A673 (cell line): ENCODE measurements at regions of chr20 and their contacts with region 1.

Region 1: DNA sequence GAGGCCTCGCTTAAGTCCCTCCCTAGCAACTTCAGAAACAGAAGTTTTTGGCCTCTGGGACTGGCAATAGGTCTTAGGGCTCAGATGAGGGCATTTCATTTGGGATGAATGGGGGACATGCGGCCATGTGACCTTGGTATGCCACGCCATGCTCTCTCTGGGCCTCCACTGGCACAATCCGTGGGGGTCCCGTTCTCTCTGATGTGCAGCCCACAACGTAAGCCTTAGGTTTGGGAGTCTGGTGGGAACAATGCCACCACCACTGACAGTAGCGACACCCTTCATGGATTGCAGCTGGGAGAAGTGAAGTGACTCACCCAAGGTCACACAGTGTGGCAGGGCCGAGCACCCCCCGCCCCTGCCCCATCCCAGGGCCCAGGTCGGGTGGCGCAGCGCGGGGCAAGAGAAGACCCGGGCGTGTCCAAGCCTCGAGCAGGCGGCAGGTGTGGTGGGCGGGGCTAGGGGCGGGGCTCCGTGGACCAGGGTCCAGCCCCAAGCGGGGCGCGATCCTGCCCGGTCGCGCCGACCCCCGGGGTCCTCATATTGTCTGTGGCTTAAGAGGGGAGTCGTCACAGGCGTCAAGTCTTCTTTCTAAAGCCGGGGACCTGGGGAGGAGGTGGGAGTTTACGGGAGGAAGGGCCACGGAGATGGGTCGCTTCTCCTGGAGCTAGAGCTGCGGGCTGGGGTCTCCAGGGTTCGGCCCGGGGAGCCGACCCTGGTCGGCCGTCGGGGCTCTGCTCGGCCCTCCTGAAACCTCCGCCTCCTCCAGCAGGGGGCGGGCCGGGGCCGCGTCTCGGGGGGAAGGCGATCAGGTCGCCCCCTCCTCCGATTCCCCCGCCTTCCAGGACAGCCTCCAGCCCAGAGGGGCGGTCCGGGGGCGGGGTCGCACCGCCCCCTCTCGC is 698 bp upstream of the CEBPB start:
- DNase-seq: peak; percentile 93
- H3K4me3 ChIP-seq: peak overlapping the region; percentile 97
- H3K27ac ChIP-seq: peak overlapping the region; percentile 99
- H3K4me1 ChIP-seq: peaks cover 43% of the 10 kb centered on the region
- H3K27me3 ChIP-seq: no peaks in the 10 kb centered on the region
- CTCF ChIP-seq: peak; percentile 74

Region 2: GRCh38 chr20:50379049-50379990 is 189.4 kb after region 1 on chr20:
- CTCF ChIA-PET with region 1: interaction called, 4 read pairs
- POLR2A ChIA-PET with region 1: interaction called, 8 read pairs
- intact Hi-C with region 1: loop called (anchors 2 kb)
- DNase-seq: peak; percentile 94
- H3K4me3 ChIP-seq: peak overlapping the region; percentile 29
- H3K27ac ChIP-seq: peak overlapping the region; percentile 86
- H3K4me1 ChIP-seq: peaks cover 51% of the 10 kb centered on the region
- H3K27me3 ChIP-seq: no peaks in the 10 kb centered on the region
- CTCF ChIP-seq: no peak

Region 3: DNA sequence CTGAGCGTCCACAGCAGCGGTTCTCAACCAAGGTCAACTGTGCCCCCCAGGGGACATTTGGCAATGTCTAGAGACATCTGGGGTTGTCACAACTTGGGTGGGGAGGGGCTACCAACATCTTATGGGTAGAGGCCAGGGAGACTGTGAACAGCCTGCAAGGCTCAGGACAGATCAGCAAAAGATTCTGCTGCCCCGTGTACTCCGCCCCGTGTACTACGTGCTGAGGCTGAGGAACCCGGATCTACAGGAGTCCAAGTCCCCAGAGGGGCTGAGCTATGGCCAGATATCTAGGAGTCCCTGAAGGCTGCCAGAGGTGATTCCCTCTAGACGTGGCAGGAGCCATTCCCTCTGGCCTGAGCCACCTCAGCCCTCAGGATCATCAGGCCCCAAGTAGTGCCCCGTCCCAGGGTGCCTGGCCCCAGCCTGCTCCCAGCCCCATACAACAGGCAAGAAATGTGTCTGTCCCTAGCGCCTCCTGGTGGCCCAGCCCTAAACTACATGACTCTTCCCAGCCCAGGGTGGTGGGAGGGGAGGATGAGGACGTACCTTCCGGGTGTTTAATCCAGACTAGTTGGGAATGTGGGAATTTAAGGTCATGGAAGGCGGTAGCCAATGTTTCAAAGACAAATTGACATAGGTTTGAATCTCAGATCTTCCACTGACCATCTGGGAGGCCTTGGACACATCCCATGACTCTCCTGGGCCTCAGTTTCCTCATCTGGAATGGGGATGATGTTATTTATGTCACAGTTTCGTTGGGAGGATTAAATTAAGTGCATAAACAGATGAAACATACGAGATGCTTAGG is 270.7 kb after region 1 on chr20:
- CTCF ChIA-PET with region 1: interaction called, 9 read pairs
- POLR2A ChIA-PET with region 1: no interaction called
- intact Hi-C with region 1: loop called (anchors 1 kb)
- DNase-seq: peak; percentile 88
- H3K4me3 ChIP-seq: no peak overlapping the region
- H3K27ac ChIP-seq: no peak overlapping the region
- H3K4me1 ChIP-seq: peaks cover 19% of the 10 kb centered on the region
- H3K27me3 ChIP-seq: no peaks in the 10 kb centered on the region
- CTCF ChIP-seq: peak; percentile 93

Region 4: DNA sequence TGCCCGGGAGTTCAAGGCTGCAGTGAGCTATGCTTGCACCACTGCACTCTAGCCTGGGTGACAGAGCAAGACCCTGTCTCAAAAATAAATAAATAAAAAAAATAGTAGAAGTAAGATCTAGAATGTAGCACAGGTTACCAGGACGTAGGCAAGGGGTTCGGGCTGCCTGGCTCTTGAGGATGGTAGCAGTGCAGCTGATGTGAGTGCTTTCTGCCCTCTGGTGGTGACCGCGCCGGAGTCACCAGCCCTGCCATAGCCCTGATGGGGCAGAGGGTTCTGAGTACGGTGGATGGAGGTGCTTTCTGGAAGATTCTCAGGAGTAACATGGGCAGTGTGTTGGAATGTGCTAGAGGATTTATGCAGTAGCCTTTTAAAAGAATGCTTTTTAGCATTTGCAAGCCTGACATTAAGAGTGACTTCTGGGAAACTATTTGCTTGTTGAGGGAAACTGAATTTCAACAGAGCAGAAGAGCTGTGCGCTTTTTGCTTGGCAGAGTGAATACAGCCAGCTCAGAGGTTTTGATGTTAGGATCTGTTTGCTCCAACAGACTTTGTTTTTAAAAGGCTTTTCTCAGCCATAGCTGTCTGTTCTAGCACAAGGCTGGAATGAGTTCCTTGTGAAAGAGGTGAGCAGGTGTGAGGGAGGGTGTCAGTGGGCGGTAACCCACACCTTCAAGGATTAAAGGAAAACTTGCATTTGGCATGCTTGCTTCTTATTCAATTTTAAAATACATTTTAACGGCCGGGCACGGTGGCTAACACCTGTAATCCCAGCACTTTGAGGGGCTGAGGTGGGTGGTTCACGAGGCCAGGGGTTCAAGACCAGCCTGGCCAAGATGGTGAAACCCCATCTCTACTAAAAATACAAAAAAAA is 386.2 kb after region 1 on chr20:
- CTCF ChIA-PET with region 1: interaction called, 6 read pairs
- POLR2A ChIA-PET with region 1: no interaction called
- intact Hi-C with region 1: loop called (anchors 2 kb)
- DNase-seq: peak; percentile 72
- H3K4me3 ChIP-seq: no peak overlapping the region
- H3K27ac ChIP-seq: no peak overlapping the region
- H3K4me1 ChIP-seq: peaks cover 34% of the 10 kb centered on the region
- H3K27me3 ChIP-seq: no peaks in the 10 kb centered on the region
- CTCF ChIP-seq: peak; percentile 85

Region 5: DNA sequence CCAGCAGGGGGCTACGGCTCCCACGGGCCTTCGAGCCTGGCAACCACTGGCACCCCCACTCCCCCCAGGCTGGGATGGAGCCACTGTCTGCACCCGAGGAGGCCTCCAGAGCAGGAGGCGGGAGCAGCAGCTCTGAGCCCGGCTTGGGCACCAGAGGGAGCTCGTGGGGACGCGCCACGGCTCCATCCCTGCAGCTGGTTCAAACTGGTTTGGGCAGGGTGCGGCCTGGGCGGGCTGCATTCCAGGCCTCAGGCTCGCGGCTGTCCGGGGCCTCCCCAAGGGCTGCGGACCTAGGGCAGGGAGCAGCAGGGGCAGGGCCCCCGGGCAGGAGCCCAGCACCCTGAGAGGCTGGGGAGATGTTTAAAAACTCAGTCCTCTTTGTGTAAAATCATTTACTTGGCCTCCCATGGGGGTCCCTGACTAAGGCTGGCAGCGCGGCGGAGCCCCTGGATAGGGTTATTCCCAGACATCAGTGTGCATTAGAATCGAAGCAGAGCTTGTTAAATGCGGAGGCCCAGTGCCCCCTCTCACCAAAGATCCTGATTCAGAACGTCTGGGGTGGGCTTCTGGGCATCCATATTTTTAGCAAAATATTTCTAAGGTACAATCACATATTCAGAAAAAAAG is 600.8 kb after region 1 on chr20:
- CTCF ChIA-PET with region 1: interaction called, 3 read pairs
- POLR2A ChIA-PET with region 1: no interaction called
- intact Hi-C with region 1: loop called (anchors 5 kb)
- DNase-seq: peak; percentile 94
- H3K4me3 ChIP-seq: no peak overlapping the region
- H3K27ac ChIP-seq: peak overlapping the region; percentile 88
- H3K4me1 ChIP-seq: peaks cover 47% of the 10 kb centered on the region
- H3K27me3 ChIP-seq: no peaks in the 10 kb centered on the region
- CTCF ChIP-seq: peak; percentile 89